ENCODE measurements at regions of chr15 and their contacts with region 1.

Region 1: GRCh38 chr15:73972984-73973682 is 19.0 kb downstream of the STOML1 start:
- DNase-seq: peak; percentile 68 to 84
- H3K4me3 ChIP-seq: peak overlapping the region; percentile 37; the same call in 1 of the 2 replicates
- H3K27ac ChIP-seq: no peak overlapping the region
- H3K4me1 ChIP-seq: 0 out of 2 replicates have a peak, but pooled peaks cover 4% of the 10 kb centered on the region
- H3K27me3 ChIP-seq: no peaks in the 10 kb centered on the region
- CTCF ChIP-seq: peak; percentile 81

Region 2: DNA sequence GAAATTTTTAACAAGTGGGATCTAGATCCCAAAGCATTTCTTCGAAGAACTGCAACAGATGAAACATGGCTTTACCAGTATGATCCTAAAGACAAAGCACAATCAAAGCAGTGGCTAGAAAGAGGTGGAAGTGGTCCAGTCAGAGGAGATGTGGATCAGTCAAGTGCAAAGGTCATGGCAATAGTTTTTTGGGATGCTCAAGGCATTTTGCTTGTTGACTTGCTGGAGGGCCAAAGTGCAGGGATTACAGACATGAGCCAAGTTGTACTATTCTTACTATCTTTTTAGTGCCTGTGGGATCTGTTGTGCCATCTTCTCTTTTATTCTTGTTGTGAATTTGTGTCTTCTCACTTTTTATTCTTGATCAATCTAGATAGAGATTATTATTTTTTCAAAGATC is 448.2 kb before region 1 on chr15:
- CTCF ChIA-PET with region 1: no interaction called
- POLR2A ChIA-PET with region 1: interaction called, 15 read pairs
- intact Hi-C with region 1: no loop called
- DNase-seq: no peak
- H3K4me3 ChIP-seq: no peak overlapping the region
- H3K27ac ChIP-seq: no peak overlapping the region
- H3K4me1 ChIP-seq: 0 out of 2 replicates have a peak, but pooled peaks cover under 1% of the 10 kb centered on the region
- H3K27me3 ChIP-seq: no peaks in the 10 kb centered on the region
- CTCF ChIP-seq: no peak

Region 3: DNA sequence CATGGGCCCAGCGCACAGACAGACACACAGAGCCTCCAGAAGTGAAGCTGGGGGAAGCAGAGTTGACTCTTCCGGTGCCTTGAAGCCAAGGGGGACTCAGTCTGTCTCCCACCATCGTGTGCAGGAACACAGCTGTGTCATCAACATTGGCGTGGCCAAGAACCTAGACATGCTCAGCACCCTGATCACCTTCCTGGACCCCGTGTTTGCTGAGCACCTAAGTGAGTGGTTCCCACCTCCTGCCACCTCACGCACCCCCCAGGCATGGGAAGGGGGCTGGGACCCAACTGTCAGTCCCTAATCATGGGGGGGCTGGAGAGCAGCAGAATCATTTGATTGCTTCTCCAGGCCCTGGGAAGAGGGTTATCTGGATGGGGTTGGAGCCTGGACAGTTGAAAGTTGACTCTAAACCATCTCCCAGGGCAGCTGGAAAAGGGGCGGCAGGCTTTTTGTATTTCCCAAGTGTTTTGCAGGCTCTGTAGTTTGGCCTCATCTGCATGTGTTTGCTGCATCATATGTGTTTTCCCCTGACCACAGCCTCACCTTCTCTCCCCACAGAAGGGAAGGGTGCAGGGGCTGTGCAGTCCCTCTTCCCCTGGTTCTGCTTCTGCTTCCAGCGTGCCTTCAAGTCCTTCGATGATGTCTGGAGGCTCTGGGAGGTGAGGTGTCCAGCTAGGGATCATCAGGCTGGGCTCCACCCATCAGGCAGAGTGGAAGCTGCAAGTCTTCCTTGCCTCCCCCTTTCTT is 87.0 kb before region 1 on chr15:
- CTCF ChIA-PET with region 1: no interaction called
- POLR2A ChIA-PET with region 1: no interaction called
- intact Hi-C with region 1: no loop called
- DNase-seq: no peak
- H3K4me3 ChIP-seq: no peak overlapping the region
- H3K27ac ChIP-seq: no peak overlapping the region
- H3K4me1 ChIP-seq: no peaks in the 10 kb centered on the region
- H3K27me3 ChIP-seq: peaks cover 70% of the 10 kb centered on the region
- CTCF ChIP-seq: no peak

Region 4: GRCh38 chr15:74036271-74037170 is 63.4 kb after region 1 on chr15:
- CTCF ChIA-PET with region 1: interaction called, 16 read pairs
- POLR2A ChIA-PET with region 1: no interaction called
- intact Hi-C with region 1: loop called (anchors 10 kb)
- DNase-seq: peak in 1 of 2 experiments; percentile 26
- H3K4me3 ChIP-seq: no peak overlapping the region
- H3K27ac ChIP-seq: no peak overlapping the region
- H3K4me1 ChIP-seq: peaks cover 7% of the 10 kb centered on the region; the same call in 1 of the 2 replicates
- H3K27me3 ChIP-seq: no peaks in the 10 kb centered on the region
- CTCF ChIP-seq: peak; percentile 58

Region 5: DNA sequence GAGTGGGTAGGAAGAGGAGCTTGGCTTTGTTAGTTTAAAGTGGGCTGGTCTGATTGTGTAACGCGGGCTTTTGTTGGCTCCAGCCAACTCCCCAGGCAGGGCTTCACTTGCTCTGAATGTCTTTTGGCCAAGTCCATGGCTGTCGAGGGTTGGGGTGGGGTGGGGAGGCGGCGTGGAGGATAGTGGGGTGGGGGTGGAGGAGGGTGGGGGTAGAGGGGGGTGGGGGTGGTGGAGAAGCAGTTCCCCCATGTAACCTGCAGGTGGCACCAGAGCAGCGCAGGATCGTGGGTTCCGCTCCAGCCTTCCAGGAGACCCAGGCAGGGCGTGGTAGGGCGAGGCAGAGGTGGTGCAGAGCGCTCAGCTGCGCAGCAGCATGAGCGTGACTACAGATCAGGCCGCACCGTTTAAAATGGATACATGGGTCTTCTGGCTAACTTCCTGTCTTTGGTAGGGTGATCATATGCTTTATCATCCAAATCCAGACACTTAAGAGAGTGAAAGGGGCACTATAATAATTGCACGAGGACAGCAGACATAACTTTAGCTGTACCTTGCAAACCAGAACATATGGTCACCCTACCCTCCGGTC is 80.9 kb after region 1 on chr15:
- CTCF ChIA-PET with region 1: interaction called, 17 read pairs
- POLR2A ChIA-PET with region 1: interaction called, 3 read pairs
- intact Hi-C with region 1: no loop called
- DNase-seq: peak; percentile 46 to 64
- H3K4me3 ChIP-seq: no peak overlapping the region
- H3K27ac ChIP-seq: no peak overlapping the region
- H3K4me1 ChIP-seq: peaks cover 38% of the 10 kb centered on the region
- H3K27me3 ChIP-seq: no peaks in the 10 kb centered on the region
- CTCF ChIP-seq: peak; percentile 57

Region 6: GRCh38 chr15:74322181-74323076 is 349.3 kb after region 1 on chr15:
- CTCF ChIA-PET with region 1: no interaction called
- POLR2A ChIA-PET with region 1: no interaction called
- intact Hi-C with region 1: loop called (anchors 1 kb)
- DNase-seq: peak; percentile 56 to 70
- H3K4me3 ChIP-seq: no peak overlapping the region
- H3K27ac ChIP-seq: no peak overlapping the region
- H3K4me1 ChIP-seq: no peaks in the 10 kb centered on the region
- H3K27me3 ChIP-seq: no peaks in the 10 kb centered on the region
- CTCF ChIP-seq: peak; percentile 91